ENCODE measurements at regions of chr7 and their contacts with region 1.

Region 1: DNA sequence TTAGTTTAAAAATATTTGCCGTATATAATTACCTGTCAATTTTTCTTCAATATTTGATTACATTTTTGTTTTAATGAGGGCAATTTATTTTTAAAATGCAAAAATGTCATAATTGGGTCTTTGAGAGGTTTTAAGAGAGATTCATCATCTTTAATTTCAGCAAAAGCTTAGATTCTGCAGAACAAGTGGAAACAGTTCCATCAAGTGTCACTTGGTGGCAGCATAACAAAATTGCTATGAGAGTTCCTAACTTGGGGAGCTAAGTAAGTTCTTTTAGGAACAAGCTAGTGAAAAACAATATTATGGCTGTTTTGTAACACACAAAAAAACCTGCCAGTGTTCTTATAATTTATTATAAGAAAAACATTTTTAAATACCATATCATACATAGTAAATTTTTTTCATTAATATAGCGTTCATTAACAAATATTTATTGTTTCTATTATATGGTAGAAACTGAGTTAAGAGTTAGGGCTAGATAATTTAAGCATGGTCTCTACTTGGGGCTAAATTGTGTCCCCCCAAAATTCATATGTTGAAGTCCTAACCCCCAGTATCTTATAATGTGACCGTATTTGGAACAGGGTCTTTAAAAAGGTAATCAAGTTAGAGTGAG is 155.2 kb downstream of the MAGI2 start:
- DNase-seq: peak; percentile 34 to 68
- ATAC-seq: no peak
- H3K4me3 ChIP-seq: no peak overlapping the region
- H3K27ac ChIP-seq: no peak overlapping the region
- H3K4me1 ChIP-seq: peaks cover 17% of the 10 kb centered on the region
- CTCF ChIP-seq: peak; percentile 76
- EP300 ChIP-seq: no peak
- POLR2A ChIP-seq: no peak
- RAD21 ChIP-seq: peak; percentile 79 to 82

Region 2: DNA sequence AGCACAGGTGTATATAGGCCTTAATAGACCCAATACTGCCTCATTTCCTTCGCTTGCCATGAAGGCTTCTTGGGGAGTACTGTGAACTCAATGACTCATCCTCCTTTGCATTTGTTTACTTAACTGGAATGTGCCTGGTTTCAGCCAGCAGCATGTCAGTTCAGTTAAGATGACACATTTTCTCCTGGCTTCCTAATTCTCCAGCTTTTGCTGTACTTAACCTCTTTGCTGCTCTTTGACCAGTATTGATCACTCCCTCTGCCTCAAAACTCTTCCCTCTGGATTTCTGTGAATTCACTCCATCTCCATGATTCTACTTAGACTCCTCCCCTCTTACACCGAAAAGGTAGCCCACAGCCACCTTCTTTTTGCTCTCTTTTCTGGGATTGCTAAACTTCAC is 19.5 kb after region 1 on chr7:
- CTCF ChIA-PET with region 1: interaction called, 12 read pairs
- POLR2A ChIA-PET with region 1: no interaction called
- DNase-seq: peak; percentile 46 to 85
- ATAC-seq: peak; percentile 97 to 98
- H3K4me3 ChIP-seq: no peak overlapping the region
- H3K27ac ChIP-seq: peak overlapping the region; percentile 56 to 72; a peak in 5 of 6 replicates
- H3K4me1 ChIP-seq: peaks cover 29% of the 10 kb centered on the region
- CTCF ChIP-seq: no peak
- EP300 ChIP-seq: no peak
- POLR2A ChIP-seq: no peak
- RAD21 ChIP-seq: no peak

Region 3: DNA sequence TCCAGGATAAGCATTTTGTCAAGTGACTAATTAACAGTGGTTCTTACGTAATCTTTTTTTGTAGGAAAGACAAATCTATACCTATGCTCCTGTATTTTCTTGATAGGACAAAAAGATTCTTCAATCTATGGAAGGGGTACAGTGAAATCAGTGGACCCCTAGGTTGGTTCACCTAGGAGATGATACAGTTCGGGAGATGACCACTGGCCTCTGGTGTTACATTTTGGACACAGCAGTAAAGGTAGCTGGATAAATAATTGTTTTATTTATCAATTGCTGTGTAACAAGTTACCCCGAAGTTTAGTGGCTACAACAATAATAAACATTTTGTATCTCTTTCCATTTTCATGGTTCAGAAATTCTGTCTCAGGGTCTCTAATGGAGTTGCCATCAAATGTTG is 443.4 kb after region 1 on chr7:
- CTCF ChIA-PET with region 1: interaction called, 14 read pairs
- POLR2A ChIA-PET with region 1: no interaction called
- DNase-seq: peak in 1 of 2 experiments; percentile 20
- ATAC-seq: peak; percentile 50 to 71; a peak in 4 of 6 replicates
- H3K4me3 ChIP-seq: no peak overlapping the region
- H3K27ac ChIP-seq: no peak overlapping the region
- H3K4me1 ChIP-seq: no peaks in the 10 kb centered on the region
- CTCF ChIP-seq: peak; percentile 40
- EP300 ChIP-seq: no peak
- POLR2A ChIP-seq: no peak
- RAD21 ChIP-seq: peak; percentile 62 to 71; a peak in 4 of 5 replicates